GM23248 (cell line): ENCODE measurements at regions of chr22 and their contacts with region 1.

Region 1: DNA sequence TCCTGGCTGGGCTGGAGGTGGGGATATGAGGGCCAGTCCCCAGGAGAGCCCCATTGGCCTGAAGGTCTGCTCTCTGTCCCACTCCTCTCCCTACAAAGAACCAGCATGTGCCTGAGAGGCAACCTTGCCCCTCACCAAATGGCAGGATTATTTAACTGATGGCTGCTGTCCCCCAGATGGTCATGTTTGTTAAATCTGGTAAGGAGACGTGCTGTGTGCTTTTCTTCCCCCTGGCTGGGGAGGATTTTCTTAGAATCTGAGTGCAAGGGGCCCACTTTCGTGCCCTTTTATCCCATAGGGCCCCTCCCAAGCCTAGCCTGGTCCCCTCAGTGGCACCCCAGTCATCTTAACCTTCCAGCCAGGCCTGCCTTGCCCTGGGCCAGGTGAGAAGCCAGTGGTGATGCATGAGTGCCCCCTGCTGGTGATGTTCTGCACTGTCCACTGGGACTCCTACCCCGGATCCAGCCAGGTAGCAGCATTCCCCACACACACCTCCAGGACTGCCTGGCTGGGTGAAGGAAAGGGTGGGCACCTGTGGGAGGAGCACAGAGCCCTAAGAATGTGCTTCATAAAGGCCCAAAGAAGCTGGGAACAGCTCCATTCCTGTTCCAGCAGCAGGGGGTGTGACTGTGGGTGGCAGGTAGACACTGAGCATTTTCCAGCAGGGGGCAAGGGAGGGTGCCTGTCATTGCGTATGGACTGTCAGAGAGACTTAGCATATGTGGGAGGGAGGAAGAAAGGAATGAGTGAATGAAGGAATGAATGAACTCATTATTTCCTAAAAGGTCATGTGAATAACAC is 28.9 kb downstream of the MFNG start:
- DNase-seq: peak; percentile 66
- H3K4me3 ChIP-seq: no peak overlapping the region
- H3K27ac ChIP-seq: no peak overlapping the region
- H3K4me1 ChIP-seq: peaks cover 18% of the 10 kb centered on the region
- H3K27me3 ChIP-seq: 0 out of 2 replicates have a peak, but pooled peaks cover 15% of the 10 kb centered on the region

Region 2: GRCh38 chr22:37267135-37267587 is 190.1 kb before region 1 on chr22:
- in situ Hi-C with region 1: no loop called
- DNase-seq: peak; percentile 57
- H3K4me3 ChIP-seq: peak overlapping the region; percentile 72
- H3K27ac ChIP-seq: no peak overlapping the region
- H3K4me1 ChIP-seq: 0 out of 2 replicates have a peak, but pooled peaks cover 3% of the 10 kb centered on the region
- H3K27me3 ChIP-seq: no peaks in the 10 kb centered on the region

Region 3: DNA sequence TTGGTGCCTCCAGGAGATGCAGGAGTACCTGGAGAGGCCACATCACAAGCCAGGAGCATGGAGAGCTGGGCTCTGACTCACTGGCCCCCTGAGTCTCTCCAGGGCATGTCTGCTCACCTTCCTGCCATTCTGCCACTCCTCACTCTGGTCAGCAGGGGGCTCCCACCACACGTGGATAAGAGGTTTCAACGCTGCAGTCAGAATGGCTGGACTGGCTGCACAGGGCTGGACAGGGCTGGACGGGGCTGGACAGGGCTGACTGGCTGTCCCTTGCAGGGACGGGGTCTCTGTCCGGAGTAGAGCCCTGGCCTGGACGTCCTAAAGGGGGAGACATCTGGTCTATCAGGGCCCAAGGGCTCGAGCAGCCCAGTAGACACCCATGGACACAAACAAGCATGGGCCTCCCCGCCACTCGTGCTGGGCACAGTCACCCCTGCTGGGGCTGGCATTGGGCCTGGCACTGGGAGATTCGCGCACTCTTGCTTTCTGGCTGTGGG is 140.4 kb before region 1 on chr22:
- in situ Hi-C with region 1: loop called (anchors 10 kb)
- DNase-seq: peak; percentile 90
- H3K4me3 ChIP-seq: no peak overlapping the region
- H3K27ac ChIP-seq: no peak overlapping the region
- H3K4me1 ChIP-seq: no peaks in the 10 kb centered on the region
- H3K27me3 ChIP-seq: no peaks in the 10 kb centered on the region